ENCODE measurements at regions of chr14 and their contacts with region 1.

Region 1: DNA sequence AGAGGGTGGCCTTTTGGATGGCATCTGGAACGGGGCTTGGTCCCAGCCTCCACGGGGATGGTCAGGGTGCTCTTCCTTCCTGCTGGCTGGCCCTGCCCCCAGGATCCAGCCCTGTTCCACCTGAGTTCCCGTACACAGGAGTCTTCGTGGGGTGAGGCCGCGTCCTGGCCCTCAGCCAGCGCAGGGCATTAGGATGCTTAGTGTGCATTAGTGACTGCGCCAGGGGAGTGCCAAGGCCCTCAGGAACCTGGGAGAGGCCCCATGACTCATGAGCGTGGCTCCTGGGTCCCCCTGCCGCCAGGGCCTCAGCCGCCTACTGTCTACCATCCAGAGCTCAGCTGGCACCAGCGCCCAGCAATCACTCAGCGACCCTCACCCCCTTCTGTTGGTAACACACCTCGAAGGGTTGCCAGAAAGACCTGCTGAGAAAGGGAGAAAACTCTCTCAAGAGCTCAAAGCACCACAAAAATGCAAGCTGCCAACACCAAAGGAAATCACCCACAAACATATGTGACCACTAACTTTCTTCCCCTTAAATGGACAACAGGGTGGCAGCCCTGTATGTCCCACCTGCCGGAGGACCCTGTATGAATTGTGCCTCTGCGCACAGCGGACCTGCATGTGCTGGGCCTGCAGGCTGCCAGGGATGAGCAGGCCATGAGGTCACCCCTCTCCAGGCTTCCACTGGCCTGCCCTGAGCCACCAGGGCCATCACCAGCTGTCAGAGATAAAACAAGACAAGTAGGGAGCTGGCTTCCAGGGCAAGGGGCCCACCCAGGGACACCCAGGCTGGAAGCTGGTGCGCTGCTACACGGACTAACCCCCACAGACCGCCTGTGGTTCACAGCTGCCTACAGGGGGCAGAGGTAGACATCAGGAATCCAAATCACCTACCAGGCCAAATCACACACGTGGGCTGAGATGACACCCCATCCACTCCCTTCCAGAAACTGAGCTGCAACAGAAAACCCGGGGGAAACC is 28.7 kb downstream of the CCDC85C start:
- DNase-seq: no peak
- H3K4me3 ChIP-seq: no peak overlapping the region
- H3K27ac ChIP-seq: no peak overlapping the region
- H3K4me1 ChIP-seq: peaks cover 4% of the 10 kb centered on the region
- H3K27me3 ChIP-seq: no peaks in the 10 kb centered on the region
- CTCF ChIP-seq: peak in 1 of 2 donors; percentile 20
- POLR2A ChIP-seq: no peak

Region 2: GRCh38 chr14:99327063-99327843 is 248.1 kb before region 1 on chr14:
- CTCF ChIA-PET with region 1: no interaction called
- POLR2A ChIA-PET with region 1: no interaction called
- dilution Hi-C with region 1: no loop called
- intact Hi-C with region 1: no loop called
- DNase-seq: no peak
- H3K4me3 ChIP-seq: no peak overlapping the region
- H3K27ac ChIP-seq: no peak overlapping the region
- H3K4me1 ChIP-seq: no peaks in the 10 kb centered on the region
- H3K27me3 ChIP-seq: no peaks in the 10 kb centered on the region
- CTCF ChIP-seq: no peak
- POLR2A ChIP-seq: no peak

Region 3: GRCh38 chr14:99563233-99564129 is 11.9 kb before region 1 on chr14:
- CTCF ChIA-PET with region 1: interaction called, 4 read pairs
- POLR2A ChIA-PET with region 1: no interaction called
- dilution Hi-C with region 1: no loop called
- intact Hi-C with region 1: loop called (anchors 1 kb)
- DNase-seq: peak; percentile 77
- H3K4me3 ChIP-seq: no peak overlapping the region
- H3K27ac ChIP-seq: no peak overlapping the region
- H3K4me1 ChIP-seq: peaks cover 5% of the 10 kb centered on the region
- H3K27me3 ChIP-seq: no peaks in the 10 kb centered on the region
- CTCF ChIP-seq: peak; percentile 46 to 70
- POLR2A ChIP-seq: no peak

Region 4: GRCh38 chr14:99590712-99591555 is 15.6 kb after region 1 on chr14:
- CTCF ChIA-PET with region 1: interaction called, 4 read pairs
- POLR2A ChIA-PET with region 1: interaction called, 4 read pairs
- dilution Hi-C with region 1: no loop called
- intact Hi-C with region 1: loop called (anchors 1 kb)
- DNase-seq: peak; percentile 85
- H3K4me3 ChIP-seq: no peak overlapping the region
- H3K27ac ChIP-seq: no peak overlapping the region
- H3K4me1 ChIP-seq: peaks cover 19% of the 10 kb centered on the region
- H3K27me3 ChIP-seq: no peaks in the 10 kb centered on the region
- CTCF ChIP-seq: peak in 1 of 2 donors; percentile 10
- POLR2A ChIP-seq: no peak

Region 5: DNA sequence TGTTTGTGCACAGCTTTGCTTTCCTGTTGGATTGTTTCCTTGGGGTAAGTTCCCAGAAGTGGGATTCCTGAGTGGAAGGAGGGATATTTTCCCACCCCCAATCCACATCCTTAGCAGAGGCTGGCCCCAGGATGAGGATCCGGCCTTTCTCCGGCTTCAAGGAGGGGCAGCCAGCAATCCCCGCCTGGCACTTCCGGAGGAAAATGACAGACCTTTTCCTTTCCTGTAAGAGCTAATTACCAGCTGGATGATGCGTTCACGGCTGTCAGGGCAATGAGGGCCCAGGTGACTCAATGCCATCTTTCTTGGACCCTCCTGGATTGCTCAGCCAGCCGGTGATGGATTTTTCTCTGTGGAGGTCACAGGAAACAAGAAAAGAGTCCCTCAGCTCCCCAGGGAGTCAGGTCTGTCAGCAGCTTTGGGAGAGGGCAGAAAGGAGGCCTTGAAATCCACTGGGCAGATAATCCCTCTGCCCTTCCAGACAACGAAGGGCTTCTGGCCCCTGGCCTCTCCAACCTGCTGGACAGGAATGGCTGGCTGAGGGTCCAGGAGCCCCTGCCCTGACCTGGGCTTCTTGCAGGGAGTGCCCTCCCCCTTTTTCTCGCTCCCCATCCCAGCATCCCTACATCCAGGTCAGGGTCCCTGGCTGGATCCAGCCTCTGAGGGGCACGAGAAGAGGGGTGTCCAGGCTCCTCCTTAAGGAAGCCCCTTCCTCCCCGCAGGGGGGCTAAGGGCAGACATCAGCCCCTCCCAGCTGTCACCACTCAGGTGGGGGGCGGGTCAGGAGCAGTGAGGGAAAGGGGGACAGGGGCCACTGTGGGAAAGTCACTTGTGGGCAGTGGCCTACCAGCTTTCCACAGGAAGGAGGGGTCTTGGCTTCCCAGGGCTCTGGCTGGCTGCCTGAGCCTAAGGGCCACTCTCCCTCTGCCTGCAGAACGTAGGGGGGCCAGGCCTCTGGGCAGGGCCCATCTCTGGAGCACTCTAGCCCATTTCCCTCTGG is 44.8 kb after region 1 on chr14:
- CTCF ChIA-PET with region 1: interaction called, 4 read pairs
- POLR2A ChIA-PET with region 1: no interaction called
- dilution Hi-C with region 1: no loop called
- intact Hi-C with region 1: loop called (anchors 1 kb)
- DNase-seq: peak; percentile 89
- H3K4me3 ChIP-seq: peak overlapping the region in 1 of 3 experiments; percentile 2
- H3K27ac ChIP-seq: peak overlapping the region; percentile 95
- H3K4me1 ChIP-seq: peaks cover 40% of the 10 kb centered on the region
- H3K27me3 ChIP-seq: no peaks in the 10 kb centered on the region
- CTCF ChIP-seq: no peak
- POLR2A ChIP-seq: no peak

Measured in endothelial cell of umbilical vein (primary cell).